Activated T-helper 2 cell treated with anti-CD3 and anti-CD28 coated beads, Interferon-gamma antibody, Interleukin-2, Interleukin-4, amounts not matched to agents 10 μg/mL and 5 μg/mL and 100 μg/mL, durations not matched to agents 14 hours and 24 hours and 36 hours (primary cell): ENCODE measurements at regions of chr6 and their contacts with region 1.

Region 1: DNA sequence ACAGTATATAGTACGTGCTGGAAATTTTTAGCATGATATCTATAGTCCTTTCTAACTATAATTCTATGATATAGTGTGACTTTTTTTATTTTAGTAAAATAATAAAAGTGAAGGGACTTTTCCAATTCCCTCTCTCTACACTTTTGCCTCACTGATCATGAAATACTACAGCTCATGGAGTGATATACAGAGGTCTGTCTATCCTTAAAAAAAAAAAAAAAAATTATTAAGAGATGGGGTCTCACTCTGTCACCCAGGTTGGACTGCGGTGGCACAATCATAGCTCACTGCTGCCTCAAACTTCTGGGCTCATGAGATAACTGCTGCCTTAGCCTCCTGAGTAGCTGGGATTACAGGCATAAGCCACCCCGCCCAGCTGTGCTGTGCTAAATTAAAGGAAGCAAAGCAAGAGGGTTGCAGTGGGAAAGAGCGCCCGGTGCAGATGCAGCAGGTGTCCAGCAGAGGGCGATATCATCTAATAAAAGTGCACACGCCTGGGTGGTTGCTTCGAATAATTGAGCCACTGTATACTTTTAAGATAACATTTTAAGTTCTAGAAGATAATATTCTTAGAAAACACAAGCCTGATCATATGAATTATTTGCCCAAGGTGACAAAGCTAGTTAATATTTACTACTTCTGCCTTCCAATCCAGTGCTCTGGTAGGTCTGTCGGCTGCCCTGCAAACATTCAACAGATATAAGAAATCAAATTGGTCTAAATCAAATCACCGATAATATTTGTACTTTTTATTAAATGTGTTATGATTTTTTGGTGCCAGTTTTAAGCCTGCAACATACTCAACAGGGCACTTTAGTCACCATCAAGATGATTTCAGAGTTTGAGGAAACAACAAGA is 94.9 kb upstream of the NT5E start:
- DNase-seq: peak; percentile 50
- H3K4me3 Mint-ChIP-seq: no peak overlapping the region
- H3K27ac Mint-ChIP-seq: no peak overlapping the region
- H3K4me1 Mint-ChIP-seq: peaks cover 3% of the 10 kb centered on the region
- H3K27me3 Mint-ChIP-seq: peaks cover 6% of the 10 kb centered on the region

Region 2: DNA sequence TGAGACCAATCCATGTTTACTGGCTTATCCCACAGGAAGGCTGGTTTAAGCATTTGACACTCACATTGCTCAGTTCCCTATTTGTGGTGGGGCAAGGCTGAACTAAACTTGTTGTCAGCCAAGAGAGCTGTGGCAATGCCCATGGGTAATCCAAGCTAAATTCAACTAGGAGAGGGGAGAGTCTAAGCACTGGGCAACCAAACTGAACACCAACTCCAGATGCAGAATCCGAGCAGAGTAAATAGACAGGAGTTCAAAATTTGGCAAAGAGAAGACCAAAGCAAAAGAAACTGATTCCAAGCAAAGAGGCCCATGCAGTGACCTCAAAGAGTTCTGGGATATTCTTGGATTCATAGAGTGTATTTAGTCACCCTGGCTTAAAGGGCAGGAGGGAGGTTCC is 11.6 kb before region 1 on chr6:
- intact Hi-C with region 1: no loop called
- DNase-seq: no peak
- H3K4me3 Mint-ChIP-seq: no peak overlapping the region
- H3K27ac Mint-ChIP-seq: no peak overlapping the region
- H3K4me1 Mint-ChIP-seq: no peaks in the 10 kb centered on the region
- H3K27me3 Mint-ChIP-seq: peaks cover 14% of the 10 kb centered on the region

Region 3: GRCh38 chr6:85372188-85372914 is 17.4 kb after region 1 on chr6:
- intact Hi-C with region 1: no loop called
- DNase-seq: no peak
- H3K4me3 Mint-ChIP-seq: no peak overlapping the region
- H3K27ac Mint-ChIP-seq: no peak overlapping the region
- H3K4me1 Mint-ChIP-seq: no peaks in the 10 kb centered on the region
- H3K27me3 Mint-ChIP-seq: peaks cover 2% of the 10 kb centered on the region

Region 4: GRCh38 chr6:85482905-85483700 is 128.1 kb after region 1 on chr6:
- intact Hi-C with region 1: loop called (anchors 1 kb)
- DNase-seq: peak; percentile 74
- H3K4me3 Mint-ChIP-seq: no peak overlapping the region
- H3K27ac Mint-ChIP-seq: peak overlapping the region; percentile 58
- H3K4me1 Mint-ChIP-seq: peaks cover 12% of the 10 kb centered on the region
- H3K27me3 Mint-ChIP-seq: no peaks in the 10 kb centered on the region

Region 5: DNA sequence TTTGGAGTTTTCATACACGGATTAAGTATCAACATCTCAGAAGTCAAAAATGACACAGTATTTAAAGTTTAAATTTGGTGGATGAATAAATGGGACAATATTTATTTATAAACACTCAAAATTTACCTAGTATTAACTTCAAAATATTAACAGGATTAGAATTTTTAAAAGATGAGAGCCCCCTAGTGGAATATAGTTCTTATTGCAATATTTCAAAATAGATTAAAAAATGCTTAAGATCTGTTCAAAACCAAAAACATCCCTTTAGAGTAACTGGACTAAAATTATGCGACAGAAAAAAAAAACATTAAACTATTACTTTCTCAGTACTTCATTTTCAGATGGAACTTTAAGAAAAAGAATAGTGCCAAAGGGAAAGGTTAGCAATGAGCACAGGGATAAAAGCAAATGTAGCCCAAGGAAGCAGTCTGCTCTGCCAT is 182.1 kb after region 1 on chr6:
- intact Hi-C with region 1: loop called (anchors 1 kb)
- DNase-seq: no peak
- H3K4me3 Mint-ChIP-seq: no peak overlapping the region
- H3K27ac Mint-ChIP-seq: no peak overlapping the region
- H3K4me1 Mint-ChIP-seq: no peaks in the 10 kb centered on the region
- H3K27me3 Mint-ChIP-seq: no peaks in the 10 kb centered on the region

Region 6: DNA sequence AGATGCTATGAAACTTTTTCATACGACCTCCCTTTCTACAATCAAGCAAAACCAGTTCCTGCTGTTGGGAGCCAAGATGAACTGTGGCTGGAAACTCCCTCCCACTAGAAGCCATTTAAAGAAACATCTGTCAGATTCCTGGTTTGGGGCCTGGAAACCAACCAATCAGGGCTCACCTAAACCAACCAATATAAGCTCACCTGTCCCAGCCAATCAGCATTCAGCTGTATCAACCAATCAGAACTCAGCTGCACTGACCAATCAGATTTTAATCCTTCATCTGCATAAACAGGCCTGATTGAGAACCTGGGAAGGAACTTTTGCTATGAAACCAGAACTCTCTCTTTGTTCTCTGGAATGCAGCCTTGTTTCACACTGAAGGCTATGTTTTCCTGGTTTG is 196.3 kb after region 1 on chr6:
- intact Hi-C with region 1: no loop called
- DNase-seq: no peak
- H3K4me3 Mint-ChIP-seq: no peak overlapping the region
- H3K27ac Mint-ChIP-seq: no peak overlapping the region
- H3K4me1 Mint-ChIP-seq: no peaks in the 10 kb centered on the region
- H3K27me3 Mint-ChIP-seq: no peaks in the 10 kb centered on the region